ENCODE measurements at regions of chr2 and their contacts with region 1.

Region 1: GRCh38 chr2:85888684-85889626 is at the start of gene ST3GAL5:
- DNase-seq: peak; percentile 88 to 96
- H3K4me3 ChIP-seq: peak within 1 kb of the TSS; percentile 82 to 89 (median 88)
- H3K27ac ChIP-seq: peak within 1 kb of the TSS; percentile 47 to 94 (median 90)
- H3K4me1 ChIP-seq: peaks cover 32 to 67% (median 46%) of the 10 kb centered on the region in 4 donors
- H3K27me3 ChIP-seq: no peaks in the 10 kb centered on the region
- CTCF ChIP-seq: peak in 5 of 7 experiments; percentile 26 to 68 (median 43)
- EP300 ChIP-seq: no peak
- POLR2A ChIP-seq: no peak
- total RNA-seq, gene ST3GAL5: 7.6 to 84.2 (median 27.8) TPM

Region 2: GRCh38 chr2:85838181-85838580 is 50.8 kb before region 1 on chr2:
- intact Hi-C with region 1: loop called (anchors 5 kb)
- DNase-seq: no peak
- H3K4me3 ChIP-seq: no peak overlapping the region
- H3K27ac ChIP-seq: no peak overlapping the region
- H3K4me1 ChIP-seq: no peaks in the 10 kb centered on the region
- H3K27me3 ChIP-seq: no peaks in the 10 kb centered on the region
- CTCF ChIP-seq: no peak
- EP300 ChIP-seq: no peak
- POLR2A ChIP-seq: no peak

Region 3: GRCh38 chr2:86035883-86036668 is 147.1 kb after region 1 on chr2:
- intact Hi-C with region 1: loop called (anchors 10 kb)
- DNase-seq: peak; percentile 65 to 91
- H3K4me3 ChIP-seq: no peak overlapping the region
- H3K27ac ChIP-seq: peak overlapping the region; percentile 70 to 90 (median 84)
- H3K4me1 ChIP-seq: peaks cover 28 to 47% (median 43%) of the 10 kb centered on the region in 4 donors
- H3K27me3 ChIP-seq: no peaks in the 10 kb centered on the region
- CTCF ChIP-seq: peak in 3 of 7 experiments; percentile 18 to 53 (median 23)
- EP300 ChIP-seq: no peak
- POLR2A ChIP-seq: no peak

Region 4: GRCh38 chr2:86079981-86080911 is 191.3 kb after region 1 on chr2:
- intact Hi-C with region 1: loop called (anchors 5 kb)
- DNase-seq: peak; percentile 86 to 89
- H3K4me3 ChIP-seq: no peak overlapping the region
- H3K27ac ChIP-seq: peak overlapping the region in 2 of 5 donors; percentile 5 to 18
- H3K4me1 ChIP-seq: peaks cover 0 to 22% (median 10%) of the 10 kb centered on the region in 4 donors
- H3K27me3 ChIP-seq: no peaks in the 10 kb centered on the region
- CTCF ChIP-seq: peak in 5 of 7 experiments; percentile 58 to 83 (median 67)
- EP300 ChIP-seq: no peak
- POLR2A ChIP-seq: no peak

Measured in stomach (tissue), 19 donors.